Activated CD8-positive, alpha-beta T cell treated with anti-CD3 and anti-CD28 coated beads, Interleukin-2, amount 10 ng/mL, durations not matched to agents 7 days and 5 days (primary cell): ENCODE measurements at regions of chr17 and their contacts with region 1.

Region 1: DNA sequence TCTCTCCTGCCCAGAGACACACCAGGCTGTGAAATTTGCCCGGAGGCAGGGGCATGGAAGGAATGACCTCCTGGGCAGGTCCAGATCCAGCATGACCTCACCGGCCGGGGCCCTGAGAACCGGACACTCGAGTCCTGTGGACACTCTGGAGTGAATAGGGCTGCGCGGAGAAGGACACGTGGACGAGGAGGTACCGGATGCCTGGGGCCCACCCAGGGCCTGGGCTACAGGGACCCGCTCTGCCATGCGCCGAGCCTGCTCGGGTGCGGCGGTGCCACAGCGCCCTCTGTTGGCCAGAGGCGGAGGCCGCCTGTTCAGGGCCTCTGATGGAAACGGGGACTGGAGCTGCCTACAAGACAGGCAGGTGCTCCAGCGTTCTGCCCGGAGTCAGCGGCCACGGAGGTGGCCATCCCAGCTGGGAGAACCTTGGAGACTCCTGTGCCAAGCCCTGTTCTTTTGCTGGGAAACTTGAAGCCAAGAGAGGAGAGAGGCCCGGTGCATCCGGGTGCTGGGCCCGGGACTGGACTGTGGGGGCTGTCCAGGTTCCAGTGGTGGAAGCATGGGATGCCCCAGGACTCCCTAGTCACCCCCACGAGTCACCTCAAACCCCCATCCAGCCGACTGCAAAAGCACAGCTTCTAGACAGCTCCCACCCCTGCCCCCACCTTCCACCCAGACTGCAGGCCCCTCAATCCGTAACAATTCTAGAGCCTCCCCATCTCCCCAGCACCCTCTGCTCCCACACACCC is 19.3 kb upstream of the NXPH3 start:
- DNase-seq: peak; percentile 88
- ATAC-seq: peak; percentile 96
- H3K4me3 Mint-ChIP-seq: no peak overlapping the region
- H3K27ac Mint-ChIP-seq: no peak overlapping the region
- H3K4me1 Mint-ChIP-seq: peaks cover 11% of the 10 kb centered on the region
- H3K27me3 Mint-ChIP-seq: peaks cover 15% of the 10 kb centered on the region

Region 2: GRCh38 chr17:49090950-49091594 is 465.3 kb before region 1 on chr17:
- CTCF ChIA-PET with region 1: no interaction called
- POLR2A ChIA-PET with region 1: no interaction called
- DNase-seq: no peak
- ATAC-seq: no peak
- H3K4me3 Mint-ChIP-seq: no peak overlapping the region
- H3K27ac Mint-ChIP-seq: no peak overlapping the region
- H3K4me1 Mint-ChIP-seq: peaks cover 5% of the 10 kb centered on the region
- H3K27me3 Mint-ChIP-seq: peaks cover 12% of the 10 kb centered on the region

Region 3: DNA sequence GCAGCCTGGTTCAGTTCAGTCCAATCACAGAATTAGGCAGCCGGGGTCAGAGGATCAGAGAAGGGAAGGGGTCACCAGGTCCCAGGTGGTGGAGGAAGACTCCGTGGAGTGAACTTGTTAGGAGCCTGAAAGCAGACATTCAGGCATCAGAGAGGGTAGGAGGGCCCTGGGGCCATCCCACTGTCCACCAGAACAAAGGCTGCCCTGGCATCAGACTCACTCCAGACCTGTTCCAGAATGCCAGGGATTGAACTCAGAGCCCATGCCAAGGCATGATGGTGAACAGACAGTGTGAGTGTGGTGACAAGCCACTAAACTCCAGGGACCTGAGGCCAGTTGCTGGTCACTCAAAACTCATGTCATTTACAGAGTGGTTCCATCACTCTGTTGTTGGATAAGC is 386.2 kb before region 1 on chr17:
- CTCF ChIA-PET with region 1: no interaction called
- POLR2A ChIA-PET with region 1: no interaction called
- DNase-seq: no peak
- ATAC-seq: no peak
- H3K4me3 Mint-ChIP-seq: no peak overlapping the region
- H3K27ac Mint-ChIP-seq: no peak overlapping the region
- H3K4me1 Mint-ChIP-seq: no peaks in the 10 kb centered on the region
- H3K27me3 Mint-ChIP-seq: peaks cover 52% of the 10 kb centered on the region

Region 4: GRCh38 chr17:49315551-49316257 is 240.7 kb before region 1 on chr17:
- CTCF ChIA-PET with region 1: interaction called, 31 read pairs
- POLR2A ChIA-PET with region 1: no interaction called
- DNase-seq: peak; percentile 90
- ATAC-seq: peak; percentile 99
- H3K4me3 Mint-ChIP-seq: peak overlapping the region; percentile 60
- H3K27ac Mint-ChIP-seq: peak overlapping the region; percentile 77
- H3K4me1 Mint-ChIP-seq: peaks cover 37% of the 10 kb centered on the region
- H3K27me3 Mint-ChIP-seq: no peaks in the 10 kb centered on the region

Region 5: DNA sequence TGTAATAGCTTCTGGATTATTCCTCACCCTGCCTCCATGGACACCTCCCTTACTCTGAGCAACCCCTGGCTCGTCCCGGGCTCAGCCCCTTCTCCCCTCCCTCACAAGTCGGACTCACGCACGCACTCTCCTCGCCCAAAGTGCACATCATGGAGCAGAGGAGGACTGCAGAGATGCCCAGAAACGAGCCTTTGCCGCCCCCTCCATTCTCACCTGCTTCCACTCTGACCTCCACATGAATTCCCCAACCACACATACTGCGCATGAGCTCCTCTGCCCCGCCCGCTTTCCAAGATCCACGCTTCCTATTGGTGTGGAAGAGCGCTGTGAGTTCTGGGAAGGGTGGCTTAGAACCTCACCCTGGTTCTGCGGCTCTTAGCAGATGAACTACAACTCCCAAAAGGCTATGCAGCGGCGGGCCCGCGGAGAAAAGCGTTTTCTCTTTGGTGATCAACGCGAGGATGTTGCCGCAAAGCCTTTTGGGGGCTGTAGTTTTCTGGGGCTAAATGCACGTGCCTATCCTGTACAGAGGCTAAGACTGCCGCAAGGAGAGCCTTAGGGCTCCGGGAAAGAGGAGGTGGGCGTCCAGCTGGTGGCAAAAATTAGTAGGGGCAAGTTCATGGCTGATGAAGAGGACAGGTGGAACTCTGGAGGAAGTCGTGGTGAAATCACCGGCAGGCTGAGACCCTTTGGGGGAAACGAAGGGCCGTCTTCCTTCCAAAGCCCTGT is 141.6 kb before region 1 on chr17 and contains the start of gene PHB1:
- CTCF ChIA-PET with region 1: interaction called, 91 read pairs
- POLR2A ChIA-PET with region 1: no interaction called
- DNase-seq: peak; percentile 98
- ATAC-seq: peak; percentile 99
- H3K4me3 Mint-ChIP-seq: peak within 1 kb of the TSS; percentile 100
- H3K27ac Mint-ChIP-seq: peak within 1 kb of the TSS; percentile 92
- H3K4me1 Mint-ChIP-seq: peaks cover 23% of the 10 kb centered on the region
- H3K27me3 Mint-ChIP-seq: no peaks in the 10 kb centered on the region
- total RNA-seq, gene PHB1: 181 to 183 TPM

Region 6: GRCh38 chr17:49434821-49435670 is 121.4 kb before region 1 on chr17:
- CTCF ChIA-PET with region 1: interaction called, 27 read pairs
- POLR2A ChIA-PET with region 1: no interaction called
- DNase-seq: peak; percentile 61
- ATAC-seq: peak; percentile 42
- H3K4me3 Mint-ChIP-seq: no peak overlapping the region
- H3K27ac Mint-ChIP-seq: no peak overlapping the region
- H3K4me1 Mint-ChIP-seq: no peaks in the 10 kb centered on the region
- H3K27me3 Mint-ChIP-seq: peaks cover 30% of the 10 kb centered on the region

Region 7: GRCh38 chr17:49567871-49568694 is 11.7 kb after region 1 on chr17:
- CTCF ChIA-PET with region 1: interaction called, 62 read pairs
- POLR2A ChIA-PET with region 1: no interaction called
- DNase-seq: peak; percentile 88
- ATAC-seq: peak; percentile 50
- H3K4me3 Mint-ChIP-seq: peak overlapping the region; percentile 56
- H3K27ac Mint-ChIP-seq: no peak overlapping the region
- H3K4me1 Mint-ChIP-seq: peaks cover 35% of the 10 kb centered on the region
- H3K27me3 Mint-ChIP-seq: peaks cover 30% of the 10 kb centered on the region

Region 8: GRCh38 chr17:49694847-49695683 is 138.7 kb after region 1 on chr17:
- CTCF ChIA-PET with region 1: interaction called, 63 read pairs
- POLR2A ChIA-PET with region 1: no interaction called
- DNase-seq: peak; percentile 84
- ATAC-seq: peak; percentile 23
- H3K4me3 Mint-ChIP-seq: peak overlapping the region; percentile 30
- H3K27ac Mint-ChIP-seq: peak overlapping the region; percentile 81
- H3K4me1 Mint-ChIP-seq: peaks cover 40% of the 10 kb centered on the region
- H3K27me3 Mint-ChIP-seq: no peaks in the 10 kb centered on the region

Region 9: GRCh38 chr17:49715717-49716279 is 159.4 kb after region 1 on chr17:
- CTCF ChIA-PET with region 1: interaction called, 60 read pairs
- POLR2A ChIA-PET with region 1: no interaction called
- DNase-seq: peak; percentile 44
- ATAC-seq: peak; percentile 70
- H3K4me3 Mint-ChIP-seq: no peak overlapping the region
- H3K27ac Mint-ChIP-seq: peak overlapping the region; percentile 50
- H3K4me1 Mint-ChIP-seq: peaks cover 34% of the 10 kb centered on the region
- H3K27me3 Mint-ChIP-seq: no peaks in the 10 kb centered on the region

Region 10: GRCh38 chr17:49980703-49981197 is 424.4 kb after region 1 on chr17:
- CTCF ChIA-PET with region 1: no interaction called
- POLR2A ChIA-PET with region 1: no interaction called
- DNase-seq: no peak
- ATAC-seq: no peak
- H3K4me3 Mint-ChIP-seq: no peak overlapping the region
- H3K27ac Mint-ChIP-seq: no peak overlapping the region
- H3K4me1 Mint-ChIP-seq: no peaks in the 10 kb centered on the region
- H3K27me3 Mint-ChIP-seq: peaks cover 28% of the 10 kb centered on the region